Transverse colon (tissue), 4 donors: ENCODE measurements at regions of chr4 and their contacts with region 1.

Region 1: GRCh38 chr4:8897251-8898167 is 25.9 kb upstream of the HMX1 start:
- DNase-seq: no peak
- H3K4me3 ChIP-seq: no peak overlapping the region
- H3K27ac ChIP-seq: no peak overlapping the region
- H3K4me1 ChIP-seq: no peaks in the 10 kb centered on the region
- H3K27me3 ChIP-seq: peaks cover 49% of the 10 kb centered on the region
- CTCF ChIP-seq: no peak
- EP300 ChIP-seq: no peak
- POLR2A ChIP-seq: no peak

Region 2: GRCh38 chr4:8940792-8941491 is 43.4 kb after region 1 on chr4:
- in situ Hi-C with region 1: no loop called
- intact Hi-C with region 1: loop called (anchors 2 kb)
- DNase-seq: no peak
- H3K4me3 ChIP-seq: no peak overlapping the region
- H3K27ac ChIP-seq: no peak overlapping the region
- H3K4me1 ChIP-seq: peaks cover 0 to 4% (median 0%) of the 10 kb centered on the region in 4 donors
- H3K27me3 ChIP-seq: peaks cover 9% of the 10 kb centered on the region
- CTCF ChIP-seq: peak in 2 of 5 experiments; percentile 16 to 17
- EP300 ChIP-seq: no peak
- POLR2A ChIP-seq: no peak

Region 3: DNA sequence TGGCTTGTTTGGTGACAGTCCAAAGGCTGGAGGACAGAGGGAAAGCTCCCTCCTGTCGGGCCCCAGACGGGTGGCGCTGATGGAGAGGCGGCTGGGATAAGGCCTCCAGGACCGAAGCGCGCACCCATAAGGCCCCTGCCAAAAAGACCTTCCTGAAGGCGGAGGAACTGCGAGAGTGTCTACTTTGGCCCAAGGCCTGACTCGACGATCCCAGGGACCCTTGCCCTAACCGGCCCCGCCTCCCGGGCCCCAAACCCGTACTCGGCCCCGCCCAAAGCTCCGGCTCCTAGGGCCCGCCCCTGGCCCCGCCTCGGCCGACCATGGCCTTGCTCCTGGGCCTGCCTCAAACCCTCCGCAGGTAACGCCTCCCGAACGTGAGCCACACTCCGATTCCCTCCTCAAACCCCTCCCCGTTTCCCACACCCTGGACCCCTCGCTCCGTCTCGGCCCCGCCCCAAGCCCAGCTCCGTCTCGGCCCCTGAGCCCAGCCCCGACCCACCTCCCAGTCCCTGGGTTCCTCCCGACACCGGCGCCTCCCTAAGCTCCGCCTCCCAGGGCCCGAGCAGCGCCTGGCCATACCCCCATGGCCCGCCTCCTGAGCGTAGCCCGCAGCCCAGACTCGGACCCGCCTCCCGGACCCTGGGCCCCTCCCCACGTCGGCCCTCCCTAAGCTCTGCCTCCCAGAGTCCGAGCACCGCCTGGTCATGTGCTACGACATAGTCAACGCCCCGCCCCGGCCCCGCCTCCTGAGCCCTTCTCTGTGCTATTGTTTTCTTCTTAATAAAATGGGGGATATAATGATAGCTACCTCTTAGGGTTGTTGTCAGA is 793.9 kb after region 1 on chr4:
- in situ Hi-C with region 1: no loop called
- intact Hi-C with region 1: no loop called
- DNase-seq: peak; percentile 98
- H3K4me3 ChIP-seq: peak overlapping the region; percentile 36 to 64 (median 50)
- H3K27ac ChIP-seq: peak overlapping the region; percentile 81 to 88 (median 86)
- H3K4me1 ChIP-seq: peaks cover 0 to 13% (median 2%) of the 10 kb centered on the region in 4 donors
- H3K27me3 ChIP-seq: no peaks in the 10 kb centered on the region
- CTCF ChIP-seq: no peak
- EP300 ChIP-seq: no peak
- POLR2A ChIP-seq: peak; percentile 29